Left ventricle myocardium superior (tissue), 1 donor: ENCODE measurements at regions of chr5 and their contacts with region 1.

Region 1: GRCh38 chr5:71586941-71587765 is at the start of gene MCCC2:
- DNase-seq: peak; percentile 99
- ATAC-seq: peak; percentile 100
- total RNA-seq, gene MCCC2: 118 TPM

Region 2: DNA sequence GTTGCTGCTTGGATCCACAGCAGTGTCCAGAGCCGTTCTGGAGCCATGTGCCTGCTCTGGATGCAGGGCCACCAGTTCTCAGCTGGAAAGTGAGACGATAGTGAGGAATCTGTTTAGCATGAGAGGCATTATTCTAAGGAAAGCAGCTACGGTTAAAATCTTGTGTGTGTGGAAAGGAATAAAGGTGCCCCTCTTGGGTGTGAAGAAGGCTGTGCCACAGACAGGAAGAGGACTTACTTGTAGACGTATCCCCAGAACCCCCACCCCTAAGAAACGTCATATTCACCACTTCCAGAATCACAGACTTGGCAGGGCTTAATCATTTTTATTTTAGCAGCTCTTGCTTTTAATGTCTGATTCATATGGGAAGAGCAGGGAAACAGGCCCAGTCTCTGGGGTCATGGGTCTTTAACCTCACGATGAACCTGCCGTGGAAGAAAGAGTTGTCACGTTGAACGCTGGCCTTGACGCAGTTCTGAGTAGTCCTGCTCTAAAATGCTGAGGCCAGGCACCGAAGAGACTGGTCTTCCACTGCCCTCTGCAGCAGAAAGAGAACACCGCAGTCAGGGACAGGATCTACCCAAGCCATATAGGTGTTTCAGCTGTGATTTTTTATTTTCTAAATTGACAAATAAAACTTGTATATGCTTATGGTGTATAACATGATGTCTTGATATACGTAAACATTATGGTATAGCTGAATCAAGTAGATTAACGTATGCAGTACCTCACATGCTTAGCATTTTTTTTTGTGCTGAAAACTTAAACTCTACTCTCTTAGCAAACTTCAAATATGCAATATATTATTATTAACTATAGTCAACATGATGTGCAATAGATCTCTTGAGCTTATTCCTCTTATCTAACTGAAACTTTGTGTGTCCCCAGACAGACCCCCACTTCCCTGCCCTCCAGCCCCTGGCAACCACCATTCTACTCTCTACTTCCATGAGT is 170.7 kb after region 1 on chr5:
- intact Hi-C with region 1: loop called (anchors 10 kb)
- DNase-seq: peak; percentile 48
- ATAC-seq: peak; percentile 98